ENCODE measurements at regions of chr5 and their contacts with region 1.

Region 1: DNA sequence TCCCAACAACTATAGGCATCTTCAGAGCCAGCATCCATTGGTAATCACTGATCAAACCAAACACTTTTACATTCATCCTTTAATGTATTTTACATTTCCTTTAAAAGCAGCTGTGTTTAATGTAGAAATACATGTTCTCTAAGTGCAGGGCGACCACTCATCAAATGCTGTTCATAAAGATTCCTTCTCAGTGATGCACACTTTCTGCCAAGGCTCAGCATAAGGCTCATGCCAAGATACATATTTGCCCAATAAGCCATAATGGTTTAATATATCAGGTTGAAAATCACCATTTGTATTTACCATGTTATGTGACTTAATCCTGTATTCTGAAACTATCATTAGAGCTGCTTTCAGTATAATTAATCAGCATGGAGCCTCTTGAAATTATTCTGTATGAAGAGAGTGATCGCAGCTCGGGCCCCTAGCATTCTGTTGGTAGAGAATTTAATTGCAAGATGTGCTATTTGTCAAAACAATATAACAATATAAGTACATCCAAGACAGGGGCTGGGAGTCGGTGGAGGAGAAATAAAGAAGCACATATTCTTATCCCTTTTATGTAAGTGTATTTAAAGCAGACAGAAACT is 267.5 kb downstream of the EBF1 start:
- DNase-seq: peak; percentile 86
- ATAC-seq: peak; percentile 88
- H3K4me3 ChIP-seq: peak overlapping the region; percentile 44; the same call in 1 of the 2 replicates
- H3K27ac ChIP-seq: peak overlapping the region; percentile 100
- H3K4me1 ChIP-seq: peaks cover 33% of the 10 kb centered on the region
- H3K27me3 ChIP-seq: no peaks in the 10 kb centered on the region
- CTCF ChIP-seq: no peak

Region 2: GRCh38 chr5:158796812-158797497 is 35.2 kb before region 1 on chr5:
- CTCF ChIA-PET with region 1: no interaction called
- POLR2A ChIA-PET with region 1: no interaction called
- intact Hi-C with region 1: no loop called
- DNase-seq: no peak
- ATAC-seq: no peak
- H3K4me3 ChIP-seq: no peak overlapping the region
- H3K27ac ChIP-seq: no peak overlapping the region
- H3K4me1 ChIP-seq: no peaks in the 10 kb centered on the region
- H3K27me3 ChIP-seq: no peaks in the 10 kb centered on the region
- CTCF ChIP-seq: no peak

Region 3: DNA sequence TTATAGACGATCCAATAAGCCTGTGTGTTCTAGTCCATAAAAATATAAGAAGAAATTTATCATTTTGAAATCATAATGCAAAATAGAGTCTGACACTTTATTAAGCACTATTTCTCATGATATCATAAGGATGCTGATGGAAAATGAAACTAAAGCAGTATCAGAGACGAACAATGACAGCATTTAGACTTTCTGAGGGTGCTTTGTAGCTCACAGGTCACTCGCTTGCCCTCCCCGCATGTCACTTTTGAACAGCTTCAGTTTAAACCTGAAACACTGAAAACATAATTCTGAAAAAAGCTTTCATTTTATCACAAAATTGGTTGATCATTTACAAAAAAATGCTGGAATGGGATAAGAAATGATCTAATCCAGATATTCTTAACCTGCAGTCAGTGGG is 20.4 kb after region 1 on chr5:
- CTCF ChIA-PET with region 1: no interaction called
- POLR2A ChIA-PET with region 1: no interaction called
- intact Hi-C with region 1: loop called (anchors 1 kb)
- DNase-seq: no peak
- ATAC-seq: no peak
- H3K4me3 ChIP-seq: no peak overlapping the region
- H3K27ac ChIP-seq: no peak overlapping the region
- H3K4me1 ChIP-seq: peaks cover 28% of the 10 kb centered on the region
- H3K27me3 ChIP-seq: no peaks in the 10 kb centered on the region
- CTCF ChIP-seq: no peak

Region 4: GRCh38 chr5:158875272-158875679 is 43.1 kb after region 1 on chr5:
- CTCF ChIA-PET with region 1: no interaction called
- POLR2A ChIA-PET with region 1: no interaction called
- intact Hi-C with region 1: loop called (anchors 1 kb)
- DNase-seq: peak; percentile 55
- ATAC-seq: peak; percentile 96
- H3K4me3 ChIP-seq: peak overlapping the region; percentile 42; the same call in 1 of the 2 replicates
- H3K27ac ChIP-seq: peak overlapping the region; percentile 68
- H3K4me1 ChIP-seq: peaks cover 12% of the 10 kb centered on the region
- H3K27me3 ChIP-seq: no peaks in the 10 kb centered on the region
- CTCF ChIP-seq: no peak

Region 5: DNA sequence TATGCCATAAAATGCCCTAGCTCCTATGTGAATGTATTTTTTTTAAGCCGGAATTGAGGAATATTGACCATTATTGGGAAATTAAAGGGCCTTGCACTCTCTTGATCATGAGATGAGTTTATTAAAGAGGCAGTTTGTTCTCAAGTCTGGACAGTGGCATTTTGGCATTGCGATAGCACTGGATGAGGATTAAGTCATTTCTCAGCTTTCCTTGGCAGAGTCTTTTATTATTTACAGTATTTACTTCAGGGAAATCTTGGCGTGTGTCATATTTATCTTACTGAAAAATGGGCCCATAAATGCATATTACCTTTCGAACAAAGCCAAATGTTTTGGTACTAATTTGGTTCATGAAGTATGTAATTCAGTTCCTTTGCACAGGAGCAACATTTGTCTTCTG is 73.1 kb after region 1 on chr5:
- CTCF ChIA-PET with region 1: no interaction called
- POLR2A ChIA-PET with region 1: no interaction called
- intact Hi-C with region 1: loop called (anchors 2 kb)
- DNase-seq: no peak
- ATAC-seq: peak; percentile 56
- H3K4me3 ChIP-seq: no peak overlapping the region
- H3K27ac ChIP-seq: no peak overlapping the region
- H3K4me1 ChIP-seq: 0 out of 2 replicates have a peak, but pooled peaks cover 1% of the 10 kb centered on the region
- H3K27me3 ChIP-seq: no peaks in the 10 kb centered on the region
- CTCF ChIP-seq: no peak

Region 6: DNA sequence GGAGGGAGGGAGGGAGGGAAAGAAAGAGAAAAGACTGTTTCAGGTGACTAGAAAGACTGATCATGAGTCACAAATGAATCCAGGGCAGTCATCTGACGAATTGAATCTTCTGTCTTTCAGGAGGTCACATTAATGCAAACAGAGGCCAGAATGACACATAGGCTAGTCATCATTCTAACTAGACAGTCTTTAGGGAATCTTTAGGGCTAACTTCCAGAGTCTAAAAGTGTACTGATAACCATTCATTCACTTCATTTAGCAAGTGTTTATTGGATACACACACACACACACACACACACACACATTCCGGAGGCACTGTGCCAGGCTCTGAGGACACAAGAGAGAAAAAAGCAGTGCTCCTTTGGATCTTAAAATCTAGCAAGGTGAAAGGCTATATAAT is 110.9 kb after region 1 on chr5:
- CTCF ChIA-PET with region 1: no interaction called
- POLR2A ChIA-PET with region 1: no interaction called
- intact Hi-C with region 1: loop called (anchors 2 kb)
- DNase-seq: peak; percentile 91
- ATAC-seq: peak; percentile 96
- H3K4me3 ChIP-seq: no peak overlapping the region
- H3K27ac ChIP-seq: peak overlapping the region; percentile 51; the same call in 1 of the 2 replicates
- H3K4me1 ChIP-seq: peaks cover 12% of the 10 kb centered on the region
- H3K27me3 ChIP-seq: no peaks in the 10 kb centered on the region
- CTCF ChIP-seq: no peak

Region 7: DNA sequence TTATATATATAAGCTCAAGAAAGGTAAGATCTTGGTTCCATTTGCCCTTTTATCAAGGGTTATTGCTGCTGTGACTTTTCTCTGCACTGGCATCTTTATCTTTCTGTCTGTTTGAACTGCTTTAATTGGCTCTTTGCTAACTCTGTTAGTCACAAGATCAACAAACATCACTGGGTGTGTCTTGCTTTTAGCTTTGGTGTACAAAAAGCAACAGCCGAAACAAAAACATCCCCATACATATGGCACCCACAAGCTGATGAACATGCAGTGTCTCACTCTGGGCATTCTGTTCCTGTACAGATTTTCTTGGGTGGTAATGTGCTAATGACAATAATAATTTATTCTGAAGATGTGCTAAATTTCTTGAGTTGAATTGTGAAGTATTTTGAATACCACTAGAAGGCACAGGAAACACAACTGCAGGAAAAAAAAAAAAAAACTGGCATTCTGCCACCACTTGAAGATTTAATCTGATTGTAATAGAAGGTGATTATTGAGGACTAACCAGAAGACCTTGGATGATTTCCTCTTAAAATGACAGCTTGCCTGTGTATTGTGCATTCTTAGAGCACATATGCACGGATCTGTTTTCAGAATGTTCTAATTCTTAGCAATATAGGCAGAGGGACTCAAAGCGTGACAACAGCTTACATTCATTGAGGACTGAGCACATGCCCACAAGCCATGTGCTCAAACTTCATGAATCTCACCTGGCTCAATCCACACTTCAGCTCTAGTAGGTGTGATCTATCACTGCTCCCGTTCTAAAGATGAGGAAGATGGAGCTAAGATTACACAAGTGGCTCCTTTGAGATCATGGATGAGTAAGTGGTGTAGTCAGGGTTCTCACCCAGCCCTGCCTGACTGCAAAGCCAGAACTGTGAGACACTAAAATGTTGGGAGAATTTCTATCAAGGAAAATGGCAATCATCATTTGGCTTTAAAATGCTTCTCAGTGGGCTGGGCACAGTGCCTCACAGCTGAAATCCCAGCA is 171.1 kb after region 1 on chr5:
- CTCF ChIA-PET with region 1: no interaction called
- POLR2A ChIA-PET with region 1: no interaction called
- intact Hi-C with region 1: loop called (anchors 5 kb)
- DNase-seq: peak; percentile 77
- ATAC-seq: peak; percentile 93
- H3K4me3 ChIP-seq: no peak overlapping the region
- H3K27ac ChIP-seq: peak overlapping the region; percentile 75
- H3K4me1 ChIP-seq: peaks cover 19% of the 10 kb centered on the region
- H3K27me3 ChIP-seq: no peaks in the 10 kb centered on the region
- CTCF ChIP-seq: no peak

Region 8: GRCh38 chr5:159100025-159100781 is 268.0 kb after region 1 on chr5:
- CTCF ChIA-PET with region 1: no interaction called
- POLR2A ChIA-PET with region 1: no interaction called
- intact Hi-C with region 1: loop called (anchors 5 kb)
- DNase-seq: peak; percentile 89
- ATAC-seq: peak; percentile 85
- H3K4me3 ChIP-seq: peak overlapping the region; percentile 72
- H3K27ac ChIP-seq: no peak overlapping the region; the same call in 1 of the 2 replicates
- H3K4me1 ChIP-seq: peaks cover 6% of the 10 kb centered on the region; the same call in 1 of the 2 replicates
- H3K27me3 ChIP-seq: peaks cover 9% of the 10 kb centered on the region
- CTCF ChIP-seq: no peak

Measured in PC-3 (cell line).